ENCODE measurements at regions of chr19 and their contacts with region 1.

Region 1: GRCh38 chr19:43316592-43317319 is 36.7 kb upstream of the CD177 start:
- DNase-seq: peak; percentile 87
- ATAC-seq: peak; percentile 96
- H3K4me3 ChIP-seq: peak overlapping the region; percentile 6; the same call in 1 of the 2 replicates
- H3K27ac ChIP-seq: no peak overlapping the region
- H3K4me1 ChIP-seq: peaks cover 18% of the 10 kb centered on the region
- H3K27me3 ChIP-seq: no peaks in the 10 kb centered on the region
- CTCF ChIP-seq: peak; percentile 80

Region 2: GRCh38 chr19:43207991-43208390 is 108.8 kb before region 1 on chr19:
- CTCF ChIA-PET with region 1: no interaction called
- POLR2A ChIA-PET with region 1: no interaction called
- intact Hi-C with region 1: loop called (anchors 10 kb)
- DNase-seq: no peak
- ATAC-seq: no peak
- H3K4me3 ChIP-seq: no peak overlapping the region
- H3K27ac ChIP-seq: no peak overlapping the region
- H3K4me1 ChIP-seq: no peaks in the 10 kb centered on the region
- H3K27me3 ChIP-seq: no peaks in the 10 kb centered on the region
- CTCF ChIP-seq: no peak

Region 3: DNA sequence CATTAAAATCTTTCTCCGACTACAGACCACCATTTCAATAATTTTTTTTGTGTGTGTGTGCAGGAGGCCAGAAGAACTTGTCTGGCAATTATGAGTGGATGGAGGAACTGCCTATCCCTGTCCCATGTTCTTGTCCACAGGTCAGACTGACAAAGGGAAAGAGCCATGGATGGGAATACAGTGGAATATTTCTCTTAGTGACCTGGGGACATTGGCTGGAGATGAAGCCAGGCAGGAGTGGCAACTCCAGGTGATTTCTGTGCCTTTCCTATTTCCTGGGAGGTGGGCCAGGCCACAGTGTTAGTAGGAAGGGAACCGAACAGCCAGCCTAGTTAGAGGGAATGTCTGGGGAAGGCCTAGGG is 51.1 kb before region 1 on chr19:
- CTCF ChIA-PET with region 1: no interaction called
- POLR2A ChIA-PET with region 1: no interaction called
- intact Hi-C with region 1: loop called (anchors 5 kb)
- DNase-seq: no peak
- ATAC-seq: peak; percentile 58
- H3K4me3 ChIP-seq: peak overlapping the region; percentile 51
- H3K27ac ChIP-seq: peak overlapping the region; percentile 97
- H3K4me1 ChIP-seq: peaks cover 35% of the 10 kb centered on the region
- H3K27me3 ChIP-seq: no peaks in the 10 kb centered on the region
- CTCF ChIP-seq: no peak

Region 4: GRCh38 chr19:43337737-43338136 is 21.0 kb after region 1 on chr19:
- CTCF ChIA-PET with region 1: no interaction called
- POLR2A ChIA-PET with region 1: no interaction called
- intact Hi-C with region 1: no loop called
- DNase-seq: no peak
- ATAC-seq: no peak
- H3K4me3 ChIP-seq: no peak overlapping the region
- H3K27ac ChIP-seq: no peak overlapping the region
- H3K4me1 ChIP-seq: peaks cover 13% of the 10 kb centered on the region; the same call in 1 of the 2 replicates
- H3K27me3 ChIP-seq: no peaks in the 10 kb centered on the region
- CTCF ChIP-seq: no peak

Region 5: GRCh38 chr19:43425567-43426392 is 109.0 kb after region 1 on chr19:
- CTCF ChIA-PET with region 1: no interaction called
- POLR2A ChIA-PET with region 1: no interaction called
- intact Hi-C with region 1: loop called (anchors 5 kb)
- DNase-seq: peak; percentile 49
- ATAC-seq: peak; percentile 48
- H3K4me3 ChIP-seq: peak overlapping the region; percentile 25; the same call in 1 of the 2 replicates
- H3K27ac ChIP-seq: no peak overlapping the region
- H3K4me1 ChIP-seq: peaks cover 25% of the 10 kb centered on the region
- H3K27me3 ChIP-seq: no peaks in the 10 kb centered on the region
- CTCF ChIP-seq: peak; percentile 63

Region 6: DNA sequence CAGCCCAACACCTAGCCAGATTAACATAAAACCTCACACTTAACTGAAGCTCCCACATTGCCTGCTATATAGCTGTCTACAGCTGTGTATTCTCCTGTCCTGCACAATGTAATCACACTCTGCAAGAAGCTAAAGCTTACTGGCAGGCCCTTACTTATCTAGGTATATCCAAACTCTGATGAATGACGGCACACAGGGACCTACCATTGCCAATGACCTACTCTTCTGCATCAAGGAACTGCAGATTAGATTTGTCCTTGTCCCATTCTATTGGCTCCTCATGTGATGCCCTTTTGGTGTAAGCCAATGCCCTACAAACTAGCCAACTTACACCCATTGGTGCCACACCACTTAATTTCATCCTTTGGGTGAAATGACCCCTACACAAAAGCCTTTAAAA is 591.9 kb after region 1 on chr19:
- CTCF ChIA-PET with region 1: no interaction called
- POLR2A ChIA-PET with region 1: no interaction called
- intact Hi-C with region 1: no loop called
- DNase-seq: no peak
- ATAC-seq: no peak
- H3K4me3 ChIP-seq: no peak overlapping the region
- H3K27ac ChIP-seq: no peak overlapping the region
- H3K4me1 ChIP-seq: no peaks in the 10 kb centered on the region
- H3K27me3 ChIP-seq: no peaks in the 10 kb centered on the region
- CTCF ChIP-seq: no peak

Measured in PC-3 (cell line).